ENCODE measurements at regions of chr9 and their contacts with region 1.

Region 1: GRCh38 chr9:33297432-33297831 is 7.1 kb downstream of the NFX1 start:
- DNase-seq: peak; percentile 33
- H3K4me3 Mint-ChIP-seq: no peak overlapping the region
- H3K27ac Mint-ChIP-seq: peak overlapping the region; percentile 73
- H3K4me1 Mint-ChIP-seq: peaks cover 71% of the 10 kb centered on the region
- H3K27me3 Mint-ChIP-seq: no peaks in the 10 kb centered on the region

Region 2: DNA sequence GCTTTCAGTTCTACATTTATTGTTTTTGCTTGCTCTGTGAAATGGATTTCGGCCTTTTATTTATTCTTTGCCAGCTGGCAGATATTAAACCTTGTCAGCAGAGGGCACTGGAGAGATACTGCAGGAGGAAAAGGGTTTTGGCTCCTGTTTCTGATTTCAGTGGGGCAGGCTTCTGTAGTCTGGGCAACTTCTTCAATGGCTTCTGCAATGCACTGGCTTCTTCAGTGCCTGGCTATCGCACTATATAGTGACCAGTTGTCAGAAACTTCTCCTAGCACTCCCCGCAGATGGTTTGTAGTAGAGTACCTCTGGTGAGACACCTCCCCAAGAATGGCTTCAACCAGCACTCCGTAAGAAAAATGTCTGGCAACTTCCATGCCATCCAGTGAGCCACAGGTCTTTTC is 10.3 kb before region 1 on chr9:
- CTCF ChIA-PET with region 1: interaction called, 13 read pairs
- DNase-seq: peak; percentile 72
- H3K4me3 Mint-ChIP-seq: no peak overlapping the region
- H3K27ac Mint-ChIP-seq: peak overlapping the region; percentile 79
- H3K4me1 Mint-ChIP-seq: peaks cover 41% of the 10 kb centered on the region
- H3K27me3 Mint-ChIP-seq: peaks cover 5% of the 10 kb centered on the region